ENCODE measurements at regions of chr9 and their contacts with region 1.

Region 1: DNA sequence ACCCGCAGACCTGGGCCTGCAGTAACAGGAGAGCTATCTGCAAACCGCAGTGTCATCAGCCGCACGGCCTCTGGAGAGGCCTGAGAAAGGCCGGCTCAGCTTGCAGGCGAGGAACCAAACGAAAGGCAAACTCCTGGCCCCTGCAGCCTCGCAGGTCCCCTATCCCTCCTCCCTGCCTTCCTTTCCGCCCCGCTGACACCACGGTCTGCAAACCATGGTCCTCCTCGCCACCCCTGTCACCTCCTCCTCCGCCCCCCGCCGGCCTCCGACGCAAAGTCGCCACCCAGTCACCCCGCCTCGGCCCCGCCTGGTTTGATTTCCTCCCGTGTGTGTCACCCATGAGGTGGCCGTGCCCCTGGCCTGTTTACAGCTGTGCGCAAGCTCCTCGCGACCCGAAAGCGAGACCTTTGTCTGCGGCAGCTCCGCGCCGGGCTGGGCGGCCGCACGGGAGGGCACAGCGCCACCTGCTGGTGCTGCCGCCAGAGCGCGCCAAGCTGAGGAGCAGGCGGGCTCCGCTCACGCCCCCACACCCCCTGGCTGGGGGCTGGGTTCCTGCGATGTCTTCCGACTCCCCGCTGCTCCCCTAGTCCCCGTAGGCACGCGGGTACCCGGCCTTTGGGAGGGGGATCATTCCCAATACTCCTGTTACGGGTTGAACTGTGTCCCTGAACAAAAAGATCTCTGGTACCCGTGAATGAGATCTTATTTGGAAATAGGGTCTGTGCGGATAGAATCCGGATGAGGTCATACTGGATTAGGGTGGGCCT is 19.4 kb downstream of the GBGT1 start:
- DNase-seq: peak; percentile 69
- H3K4me3 ChIP-seq: peak overlapping the region in 1 of 3 experiments; percentile 5
- H3K27ac ChIP-seq: no peak overlapping the region
- H3K4me1 ChIP-seq: peaks cover 15% of the 10 kb centered on the region
- H3K27me3 ChIP-seq: no peaks in the 10 kb centered on the region
- CTCF ChIP-seq: peak; percentile 97 to 99
- POLR2A ChIP-seq: no peak

Region 2: DNA sequence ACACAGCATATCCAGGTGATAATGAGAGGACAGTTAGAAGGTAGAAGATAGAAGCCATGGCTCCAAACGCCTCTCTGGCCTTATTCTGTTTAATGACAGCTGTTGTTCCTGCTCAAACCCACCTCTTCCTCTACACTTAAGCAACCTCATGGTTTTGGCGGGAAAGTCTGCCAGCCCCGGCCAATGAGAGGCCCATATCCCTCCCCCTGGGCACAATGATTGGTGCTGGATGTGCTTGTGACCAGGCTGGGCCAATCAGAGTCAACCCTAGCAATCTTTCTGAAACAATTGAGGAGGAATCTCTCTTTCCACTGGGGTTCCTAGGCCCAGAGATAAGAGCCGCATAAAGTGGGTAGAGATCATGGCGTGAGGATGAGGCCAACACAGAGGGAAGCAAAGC is 170.6 kb before region 1 on chr9:
- CTCF ChIA-PET with region 1: interaction called, 10 read pairs
- POLR2A ChIA-PET with region 1: no interaction called
- dilution Hi-C with region 1: no loop called
- intact Hi-C with region 1: no loop called
- DNase-seq: no peak
- H3K4me3 ChIP-seq: no peak overlapping the region
- H3K27ac ChIP-seq: no peak overlapping the region
- H3K4me1 ChIP-seq: no peaks in the 10 kb centered on the region
- H3K27me3 ChIP-seq: peaks cover 9 to 12% of the 10 kb centered on the region in 2 experiments
- CTCF ChIP-seq: no peak
- POLR2A ChIP-seq: no peak

Region 3: GRCh38 chr9:133030317-133031129 is 113.8 kb before region 1 on chr9 and contains the start of gene GTF3C5:
- CTCF ChIA-PET with region 1: interaction called, 15 read pairs
- POLR2A ChIA-PET with region 1: no interaction called
- dilution Hi-C with region 1: no loop called
- intact Hi-C with region 1: no loop called
- DNase-seq: peak; percentile 99
- H3K4me3 ChIP-seq: peak within 1 kb of the TSS; percentile 85 to 93 (median 92)
- H3K27ac ChIP-seq: peak within 1 kb of the TSS; percentile 69
- H3K4me1 ChIP-seq: peaks cover 8% of the 10 kb centered on the region
- H3K27me3 ChIP-seq: no peaks in the 10 kb centered on the region
- CTCF ChIP-seq: no peak
- POLR2A ChIP-seq: peak; percentile 84
- total RNA-seq, gene GTF3C5: 65.6 and 66.6 TPM in 2 replicates

Region 4: GRCh38 chr9:133048569-133048968 is 95.8 kb before region 1 on chr9:
- CTCF ChIA-PET with region 1: interaction called, 25 read pairs
- POLR2A ChIA-PET with region 1: interaction called, 3 read pairs
- dilution Hi-C with region 1: no loop called
- intact Hi-C with region 1: loop called (anchors 1 kb)
- DNase-seq: peak; percentile 12
- H3K4me3 ChIP-seq: no peak overlapping the region
- H3K27ac ChIP-seq: no peak overlapping the region
- H3K4me1 ChIP-seq: no peaks in the 10 kb centered on the region
- H3K27me3 ChIP-seq: no peaks in the 10 kb centered on the region
- CTCF ChIP-seq: peak in 1 of 2 donors; percentile 41
- POLR2A ChIP-seq: no peak

Region 5: DNA sequence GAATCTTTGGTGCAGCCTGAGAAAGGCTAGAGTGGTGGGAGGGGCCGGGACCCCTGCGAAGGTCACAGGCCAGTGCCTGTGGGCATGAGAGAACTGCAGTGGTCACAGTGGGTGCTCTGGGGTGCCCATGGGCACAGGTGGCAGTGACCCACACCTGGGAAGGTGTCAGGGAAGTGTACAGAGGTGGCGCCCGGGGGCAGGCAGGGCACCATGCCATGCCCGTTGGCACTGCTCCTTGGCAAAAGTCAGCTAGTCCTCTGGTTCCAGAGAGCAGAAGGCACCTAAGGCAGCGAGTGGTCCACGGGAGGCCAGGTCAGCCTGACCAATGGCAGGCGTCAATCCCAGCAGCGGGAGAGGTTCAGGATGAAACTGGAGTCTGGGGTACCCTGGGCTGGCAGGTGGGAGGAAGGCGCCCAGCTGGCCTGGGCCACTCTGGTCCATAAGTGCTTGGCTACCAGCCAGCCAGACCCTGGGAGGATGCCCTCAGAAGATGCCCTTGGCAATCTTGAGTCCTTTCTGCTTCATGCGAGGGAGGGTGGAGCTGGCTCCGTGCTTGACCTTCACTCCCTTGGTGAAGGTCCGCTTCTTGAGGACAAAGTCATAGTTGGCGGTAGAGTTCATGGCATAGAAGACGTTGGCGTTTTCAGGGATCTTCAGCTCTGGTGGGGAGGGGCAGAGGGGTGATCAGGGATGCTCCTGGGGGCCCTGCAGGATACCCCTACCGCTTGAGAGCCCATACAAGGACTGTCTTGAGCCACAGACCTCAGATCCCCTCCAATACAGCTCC is 46.0 kb before region 1 on chr9:
- CTCF ChIA-PET with region 1: interaction called, 147 read pairs
- POLR2A ChIA-PET with region 1: no interaction called
- dilution Hi-C with region 1: no loop called
- intact Hi-C with region 1: loop called (anchors 1 kb)
- DNase-seq: no peak
- H3K4me3 ChIP-seq: no peak overlapping the region
- H3K27ac ChIP-seq: no peak overlapping the region
- H3K4me1 ChIP-seq: no peaks in the 10 kb centered on the region
- H3K27me3 ChIP-seq: no peaks in the 10 kb centered on the region
- CTCF ChIP-seq: no peak
- POLR2A ChIP-seq: no peak

Region 6: GRCh38 chr9:133113949-133114885 is 30.1 kb before region 1 on chr9:
- CTCF ChIA-PET with region 1: interaction called, 110 read pairs
- POLR2A ChIA-PET with region 1: interaction called, 3 read pairs
- dilution Hi-C with region 1: no loop called
- intact Hi-C with region 1: no loop called
- DNase-seq: no peak
- H3K4me3 ChIP-seq: no peak overlapping the region
- H3K27ac ChIP-seq: no peak overlapping the region
- H3K4me1 ChIP-seq: peaks cover 20% of the 10 kb centered on the region
- H3K27me3 ChIP-seq: no peaks in the 10 kb centered on the region
- CTCF ChIP-seq: no peak
- POLR2A ChIP-seq: no peak

Region 7: GRCh38 chr9:133133681-133134418 is 10.5 kb before region 1 on chr9:
- CTCF ChIA-PET with region 1: interaction called, 105 read pairs
- POLR2A ChIA-PET with region 1: interaction called, 3 read pairs
- dilution Hi-C with region 1: no loop called
- intact Hi-C with region 1: loop called (anchors 1 kb)
- DNase-seq: peak; percentile 98
- H3K4me3 ChIP-seq: no peak overlapping the region
- H3K27ac ChIP-seq: peak overlapping the region; percentile 80
- H3K4me1 ChIP-seq: peaks cover 30% of the 10 kb centered on the region
- H3K27me3 ChIP-seq: no peaks in the 10 kb centered on the region
- CTCF ChIP-seq: peak in 1 of 2 donors; percentile 1
- POLR2A ChIP-seq: peak; percentile 85

Measured in endothelial cell of umbilical vein (primary cell).